WTC11 (cell line): ENCODE measurements at regions of chr22 and their contacts with region 1.

Region 1: DNA sequence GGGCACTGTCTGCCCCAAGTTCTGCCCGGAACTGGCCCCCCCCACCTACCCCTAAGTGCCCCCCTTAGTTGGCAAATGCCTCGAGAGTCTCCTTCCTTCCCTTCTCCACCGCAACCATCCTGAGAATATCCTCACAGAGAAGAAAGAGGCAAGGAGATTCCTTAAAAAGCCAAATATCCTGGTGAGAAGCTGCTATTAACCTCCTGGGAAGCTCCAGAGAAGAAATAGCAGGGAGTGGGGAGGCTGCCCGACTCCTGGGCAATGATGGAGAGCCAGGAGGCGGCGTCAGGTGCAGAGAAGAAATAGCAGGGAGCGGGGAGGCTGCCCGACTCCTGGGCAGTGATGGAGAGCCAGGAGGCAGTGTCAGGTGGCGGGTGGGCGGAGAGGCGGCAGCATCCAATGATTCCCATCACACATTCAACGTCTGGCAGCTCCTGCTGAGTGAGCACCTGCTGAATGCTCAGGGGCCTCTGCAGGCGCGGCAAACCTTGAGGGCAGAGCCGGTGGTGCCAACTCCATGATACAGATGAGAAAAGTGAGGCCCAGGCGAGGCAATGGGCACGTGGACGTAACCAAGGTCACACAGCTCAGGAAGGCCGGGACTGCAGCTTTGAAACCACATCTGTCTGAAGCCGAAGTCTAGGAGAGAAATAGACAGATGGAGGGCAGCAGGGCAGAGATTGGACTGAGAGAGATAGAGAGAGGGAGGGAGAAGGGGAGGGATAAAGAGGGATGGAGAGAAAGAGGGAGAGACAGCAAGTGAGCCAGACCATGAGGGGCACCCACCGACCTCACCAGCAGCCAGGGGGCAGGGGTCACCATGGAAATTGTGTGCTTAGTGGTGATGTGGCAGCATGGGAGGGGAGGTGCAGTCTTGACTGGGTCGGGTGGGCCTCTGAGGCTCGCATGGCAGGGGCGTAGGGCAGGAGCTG is 58.3 kb downstream of the CYTH4 start:
- DNase-seq: no peak
- ATAC-seq: peak; percentile 60
- H3K4me3 Mint-ChIP-seq: peak overlapping the region; percentile 35
- H3K27ac Mint-ChIP-seq: no peak overlapping the region
- H3K4me1 Mint-ChIP-seq: peaks cover 38% of the 10 kb centered on the region
- H3K27me3 Mint-ChIP-seq: peaks cover 18% of the 10 kb centered on the region
- CTCF ChIP-seq: no peak

Region 2: DNA sequence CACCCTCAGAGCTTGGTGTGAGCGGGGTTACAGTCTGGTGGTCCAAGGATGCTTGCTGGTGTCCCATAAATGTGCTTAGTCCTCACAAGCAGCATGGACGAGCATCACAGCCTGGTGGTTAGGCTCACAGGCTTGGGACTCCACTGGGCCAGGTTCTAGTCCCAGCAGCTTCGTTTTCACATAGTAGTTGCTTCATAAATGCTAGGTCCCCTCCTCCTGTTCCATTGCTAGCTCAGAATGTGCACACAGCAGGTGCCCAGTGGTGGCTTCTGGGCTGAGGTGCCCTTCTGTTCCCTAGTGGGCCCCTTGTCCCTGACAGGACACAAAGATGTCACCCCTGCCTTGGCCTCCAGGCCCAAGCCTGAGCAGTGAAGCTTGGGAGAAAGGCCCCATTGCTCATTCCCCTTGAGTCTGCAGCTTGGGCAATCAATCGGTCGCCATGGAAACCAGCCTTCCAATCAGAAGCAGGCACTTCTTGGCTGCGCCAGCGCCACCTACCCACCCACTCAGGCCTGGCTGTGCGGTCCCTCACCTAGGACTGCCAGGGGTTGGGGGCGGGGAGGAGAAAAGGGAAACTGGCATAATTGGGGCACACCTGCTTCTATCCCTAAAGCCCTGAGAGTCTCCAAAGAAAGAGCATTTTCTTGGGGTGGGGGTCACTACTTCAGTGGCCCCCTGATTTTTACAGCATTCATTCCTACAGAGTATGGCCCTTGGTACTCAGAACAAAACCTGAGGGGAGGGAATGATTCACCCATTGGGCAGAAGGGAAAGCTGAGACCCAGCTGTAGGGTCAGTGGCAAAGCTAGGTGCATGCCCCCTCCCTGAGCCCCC is 10.2 kb before region 1 on chr22:
- CTCF ChIA-PET with region 1: interaction called, 13 read pairs
- POLR2A ChIA-PET with region 1: no interaction called
- DNase-seq: peak; percentile 91
- ATAC-seq: peak; percentile 84
- H3K4me3 Mint-ChIP-seq: no peak overlapping the region
- H3K27ac Mint-ChIP-seq: no peak overlapping the region
- H3K4me1 Mint-ChIP-seq: peaks cover 29% of the 10 kb centered on the region
- H3K27me3 Mint-ChIP-seq: peaks cover 43% of the 10 kb centered on the region
- CTCF ChIP-seq: no peak

Region 3: DNA sequence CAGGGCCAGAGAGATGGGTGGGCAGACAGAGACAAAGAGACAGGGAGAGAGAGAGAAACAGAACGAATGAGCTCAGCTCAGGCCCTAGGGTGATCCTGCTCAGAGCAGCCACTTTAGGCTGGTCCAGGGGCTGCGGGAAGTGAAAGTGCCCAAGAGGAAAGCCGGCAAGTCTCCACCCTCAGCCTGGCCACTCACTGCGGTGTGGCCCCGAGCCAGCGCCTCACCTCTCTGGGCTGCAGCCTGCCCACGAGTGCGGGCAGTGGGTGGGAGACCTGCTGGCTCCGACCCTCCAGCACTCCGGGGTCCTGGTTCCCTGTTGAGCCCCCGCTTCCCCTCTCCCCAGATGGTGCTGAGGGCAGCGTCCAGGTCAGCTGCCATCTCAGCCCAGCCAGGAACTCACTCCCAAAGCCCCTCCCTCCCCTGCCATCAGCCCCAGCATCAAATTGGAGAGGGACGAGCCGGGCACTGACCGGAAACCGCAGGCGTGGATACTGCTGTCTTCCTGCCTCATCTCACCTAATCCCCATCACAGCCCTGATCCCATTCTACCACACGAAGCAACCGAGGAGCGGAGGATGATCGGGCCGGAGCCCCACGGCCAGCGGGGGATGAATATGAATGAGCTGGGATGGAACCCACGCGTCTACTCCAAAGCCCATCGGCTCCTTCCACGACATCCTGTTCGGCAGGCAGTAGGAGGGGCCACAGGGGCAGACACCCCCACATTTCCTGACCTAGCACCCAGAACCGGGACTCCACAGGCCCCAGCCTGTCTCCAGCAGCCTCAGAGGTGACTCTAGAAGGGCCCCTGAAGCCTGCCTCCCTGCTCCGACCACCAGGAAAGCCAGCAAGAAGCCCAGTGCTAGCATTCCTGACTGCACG is 69.8 kb after region 1 on chr22:
- CTCF ChIA-PET with region 1: no interaction called
- POLR2A ChIA-PET with region 1: no interaction called
- DNase-seq: no peak
- ATAC-seq: no peak; the same call in 1 of the 2 replicates
- H3K4me3 Mint-ChIP-seq: no peak overlapping the region
- H3K27ac Mint-ChIP-seq: peak overlapping the region; percentile 49; the same call in 1 of the 2 replicates
- H3K4me1 Mint-ChIP-seq: 0 out of 2 replicates have a peak, but pooled peaks cover 3% of the 10 kb centered on the region
- H3K27me3 Mint-ChIP-seq: no peaks in the 10 kb centered on the region
- CTCF ChIP-seq: no peak

Region 4: GRCh38 chr22:37420686-37421467 is 80.3 kb after region 1 on chr22:
- CTCF ChIA-PET with region 1: no interaction called
- POLR2A ChIA-PET with region 1: no interaction called
- DNase-seq: no peak
- ATAC-seq: peak; percentile 5
- H3K4me3 Mint-ChIP-seq: peak overlapping the region; percentile 87
- H3K27ac Mint-ChIP-seq: no peak overlapping the region; the same call in 1 of the 2 replicates
- H3K4me1 Mint-ChIP-seq: peaks cover 36% of the 10 kb centered on the region
- H3K27me3 Mint-ChIP-seq: peaks cover 56% of the 10 kb centered on the region
- CTCF ChIP-seq: no peak

Region 5: GRCh38 chr22:37448511-37449127 is 108.0 kb after region 1 on chr22:
- CTCF ChIA-PET with region 1: no interaction called
- POLR2A ChIA-PET with region 1: no interaction called
- DNase-seq: no peak
- ATAC-seq: no peak
- H3K4me3 Mint-ChIP-seq: no peak overlapping the region
- H3K27ac Mint-ChIP-seq: no peak overlapping the region; the same call in 1 of the 2 replicates
- H3K4me1 Mint-ChIP-seq: no peaks in the 10 kb centered on the region; the same call in 1 of the 2 replicates
- H3K27me3 Mint-ChIP-seq: peaks cover 3% of the 10 kb centered on the region; the same call in 1 of the 2 replicates
- CTCF ChIP-seq: no peak

Region 6: DNA sequence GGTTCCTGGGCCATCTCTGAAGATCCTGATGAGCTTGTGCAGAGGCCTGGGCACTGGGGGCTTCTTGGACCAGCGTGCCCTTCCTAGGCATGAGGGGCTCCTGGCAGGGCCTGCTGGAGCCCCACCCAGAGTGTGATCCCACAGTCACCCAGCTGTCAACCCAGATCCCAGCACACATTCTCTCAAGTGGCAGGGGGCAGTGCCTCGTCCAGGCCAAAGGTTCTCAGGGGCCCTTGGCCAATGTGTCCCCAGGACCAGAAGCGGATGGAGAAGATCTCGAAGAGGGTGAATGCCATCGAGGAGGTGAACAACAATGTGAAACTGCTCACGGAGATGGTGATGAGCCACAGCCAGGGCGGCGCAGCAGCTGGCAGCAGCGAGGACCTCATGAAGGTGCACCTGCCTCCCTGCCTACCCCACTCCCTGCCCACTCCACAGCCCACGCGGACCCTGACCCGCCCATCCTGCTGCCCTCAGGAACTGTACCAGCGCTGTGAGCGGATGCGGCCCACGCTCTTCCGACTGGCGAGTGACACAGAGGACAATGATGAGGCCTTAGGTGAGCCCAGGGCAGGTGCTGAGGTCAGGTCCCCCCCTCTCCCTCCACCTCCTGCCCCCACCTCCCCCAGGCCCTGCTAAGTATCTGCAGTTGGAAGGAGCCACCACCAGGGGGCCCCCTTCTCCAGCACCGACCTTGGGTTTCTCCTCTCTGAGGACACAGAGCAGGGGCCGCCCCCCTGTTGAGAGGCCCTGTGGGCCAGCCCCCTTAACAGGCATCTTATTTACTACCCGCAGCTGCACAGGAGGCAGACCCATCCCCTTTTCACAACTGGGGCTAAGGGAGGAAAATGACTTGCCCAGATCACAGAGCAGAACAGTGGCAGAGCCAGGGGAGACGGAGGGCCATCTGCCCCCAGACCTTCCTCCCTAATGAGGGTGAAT is 282.7 kb after region 1 on chr22:
- CTCF ChIA-PET with region 1: no interaction called
- POLR2A ChIA-PET with region 1: interaction called, 11 read pairs
- DNase-seq: peak; percentile 88
- ATAC-seq: peak; percentile 89
- H3K4me3 Mint-ChIP-seq: no peak overlapping the region
- H3K27ac Mint-ChIP-seq: no peak overlapping the region
- H3K4me1 Mint-ChIP-seq: peaks cover 3% of the 10 kb centered on the region
- H3K27me3 Mint-ChIP-seq: no peaks in the 10 kb centered on the region
- CTCF ChIP-seq: peak; percentile 88